Activated CD4-positive, alpha-beta memory T cell treated with anti-CD3 and anti-CD28 coated beads, Interleukin-2, amount 10 ng/mL, durations not matched to agents 7 days and 5 days (primary cell): ENCODE measurements at regions of chr9 and their contacts with region 1.

Region 1: DNA sequence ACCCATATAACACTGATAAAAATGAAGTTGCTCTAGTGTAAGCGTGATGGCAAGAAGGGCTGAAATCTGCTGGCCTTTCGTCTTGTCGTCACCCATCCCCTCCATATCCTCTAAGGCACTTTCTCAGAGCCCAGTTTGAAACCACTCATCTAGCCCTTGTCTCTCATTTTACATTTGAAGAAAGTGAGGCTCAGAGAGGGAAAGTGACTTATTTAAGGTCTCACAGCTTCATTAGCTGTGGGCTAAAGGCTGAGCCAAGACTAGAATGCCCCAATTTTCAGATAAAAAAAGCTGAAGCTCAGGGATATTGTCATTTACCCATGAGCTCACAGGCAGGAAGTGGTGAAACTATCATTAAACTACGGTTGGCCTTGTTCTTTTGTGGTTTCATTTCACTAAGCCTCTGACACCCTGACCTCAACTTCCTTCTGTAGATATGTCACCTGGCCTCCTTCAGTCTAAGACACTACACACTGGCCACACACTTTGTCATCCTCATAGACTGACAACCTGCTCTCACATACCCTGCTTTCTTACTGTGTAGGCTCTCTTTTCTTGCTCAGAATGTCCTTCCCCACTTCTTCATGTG is 176.7 kb upstream of the DMAC1 start:
- DNase-seq: peak; percentile 72
- H3K4me3 Mint-ChIP-seq: peak overlapping the region; percentile 18
- H3K27ac Mint-ChIP-seq: peak overlapping the region; percentile 84
- H3K4me1 Mint-ChIP-seq: peaks cover 58% of the 10 kb centered on the region
- H3K27me3 Mint-ChIP-seq: peaks cover 2% of the 10 kb centered on the region

Region 2: GRCh38 chr9:7799234-7799943 is 176.9 kb before region 1 on chr9 and contains the start of gene DMAC1:
- CTCF ChIA-PET with region 1: no interaction called
- POLR2A ChIA-PET with region 1: interaction called, 10 read pairs
- DNase-seq: peak; percentile 81
- H3K4me3 Mint-ChIP-seq: peak within 1 kb of the TSS; percentile 93
- H3K27ac Mint-ChIP-seq: peak within 1 kb of the TSS; percentile 91
- H3K4me1 Mint-ChIP-seq: peaks cover 39% of the 10 kb centered on the region
- H3K27me3 Mint-ChIP-seq: no peaks in the 10 kb centered on the region
- total RNA-seq, gene DMAC1: 46.5 to 50.1 TPM

Region 3: DNA sequence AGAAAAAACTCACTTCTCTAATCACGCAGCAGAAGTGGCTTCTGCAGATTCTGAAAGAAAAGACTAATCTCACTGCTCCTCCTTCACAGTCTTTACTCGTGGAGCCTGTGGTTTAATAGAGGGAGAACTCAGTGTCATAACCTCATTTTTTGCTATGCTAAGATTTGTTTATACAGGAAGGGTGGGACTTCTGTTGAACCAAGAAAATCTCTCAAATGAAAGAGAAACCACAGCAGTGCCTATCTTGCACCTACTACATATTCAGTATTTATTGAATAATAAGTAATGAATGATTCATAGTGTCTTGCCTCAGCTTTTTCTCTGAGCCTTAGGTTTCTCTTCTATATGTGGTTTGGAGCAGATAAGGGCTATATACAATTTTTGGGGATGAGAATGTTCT is 40.6 kb before region 1 on chr9:
- CTCF ChIA-PET with region 1: no interaction called
- POLR2A ChIA-PET with region 1: interaction called, 18 read pairs
- DNase-seq: no peak
- H3K4me3 Mint-ChIP-seq: peak overlapping the region; percentile 47
- H3K27ac Mint-ChIP-seq: peak overlapping the region; percentile 89
- H3K4me1 Mint-ChIP-seq: peaks cover 20% of the 10 kb centered on the region
- H3K27me3 Mint-ChIP-seq: no peaks in the 10 kb centered on the region